ENCODE measurements at regions of chr22 and their contacts with region 1.

Region 1: GRCh38 chr22:30396871-30397655 is at the start of gene SEC14L2:
- DNase-seq: no peak
- H3K4me3 ChIP-seq: peak within 1 kb of the TSS; percentile 77
- H3K27me3 ChIP-seq: no peaks in the 10 kb centered on the region
- CTCF ChIP-seq: no peak
- polyA plus RNA-seq, gene SEC14L2: 20.1 and 22.8 TPM in 2 replicates

Region 2: GRCh38 chr22:30373331-30374325 is 23.4 kb before region 1 on chr22:
- CTCF ChIA-PET with region 1: no interaction called
- POLR2A ChIA-PET with region 1: no interaction called
- DNase-seq: no peak
- H3K4me3 ChIP-seq: no peak overlapping the region
- H3K27me3 ChIP-seq: no peaks in the 10 kb centered on the region
- CTCF ChIP-seq: no peak

Region 3: GRCh38 chr22:30408414-30409104 is 11.5 kb after region 1 on chr22:
- CTCF ChIA-PET with region 1: interaction called, 6 read pairs
- POLR2A ChIA-PET with region 1: interaction called, 11 read pairs
- DNase-seq: peak; percentile 62
- H3K4me3 ChIP-seq: no peak overlapping the region
- H3K27me3 ChIP-seq: no peaks in the 10 kb centered on the region
- CTCF ChIP-seq: no peak

Region 4: DNA sequence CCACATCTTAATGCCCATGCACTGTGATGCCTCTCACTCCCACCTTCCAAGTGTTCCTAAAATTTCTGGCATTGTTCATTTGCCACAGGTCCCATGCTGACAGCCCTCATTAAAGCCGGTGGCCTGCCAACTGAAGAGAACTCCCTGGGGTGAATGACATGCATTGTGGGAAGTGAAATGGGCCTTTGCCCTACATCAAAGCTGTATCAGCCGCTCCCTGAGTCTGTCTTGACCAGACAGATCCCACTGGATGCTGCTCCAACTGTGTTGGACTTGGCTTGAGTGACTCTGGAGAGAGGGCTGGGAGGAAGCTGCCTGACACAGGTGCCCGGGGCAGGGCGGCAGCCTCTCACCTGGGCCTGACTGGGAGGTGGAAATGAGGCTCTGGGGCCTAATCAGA is 117.2 kb after region 1 on chr22:
- CTCF ChIA-PET with region 1: no interaction called
- POLR2A ChIA-PET with region 1: interaction called, 16 read pairs
- DNase-seq: no peak
- H3K4me3 ChIP-seq: no peak overlapping the region
- H3K27me3 ChIP-seq: peaks cover 1% of the 10 kb centered on the region; the same call in 1 of the 2 replicates
- CTCF ChIP-seq: no peak

Measured in BJ (cell line).